Naive thymus-derived CD4-positive, alpha-beta T cell (primary cell): ENCODE measurements at regions of chr4 and their contacts with region 1.

Region 1: DNA sequence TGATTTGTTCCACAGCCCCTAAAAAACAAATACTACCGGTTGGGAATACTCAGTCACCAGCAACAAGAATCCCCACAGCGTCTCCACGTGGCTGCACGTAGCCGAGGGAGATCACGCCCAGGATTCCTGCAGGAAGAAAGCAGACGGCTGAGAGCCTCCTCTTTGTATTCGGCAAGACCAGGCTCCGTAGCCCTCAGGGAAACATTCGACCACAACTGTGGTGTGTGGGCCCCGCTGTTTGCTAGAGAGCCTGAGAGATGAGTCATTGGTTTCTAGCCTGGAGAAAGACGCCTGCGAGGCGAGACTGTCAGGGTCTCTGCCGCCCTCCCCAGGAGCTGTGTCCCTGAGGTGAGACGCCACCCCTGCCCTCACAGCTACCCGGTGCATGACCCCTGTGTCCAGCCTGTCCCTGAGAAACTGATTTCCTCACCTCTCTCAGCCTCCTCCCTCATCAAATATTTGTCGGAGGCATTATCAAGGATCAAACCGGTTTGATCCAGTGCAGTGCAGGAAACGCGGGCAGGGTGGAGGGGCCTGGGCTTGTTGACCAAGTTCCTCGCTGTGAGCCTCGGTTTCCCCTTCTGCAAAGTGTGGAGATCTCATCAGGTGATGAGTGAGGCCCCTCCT is 4.7 kb upstream of the S100P start:
- DNase-seq: peak in 3 of 9 donors; percentile 18 to 79 (median 62)
- ATAC-seq: peak; percentile 79
- H3K4me3 ChIP-seq: peak overlapping the region; percentile 43
- H3K4me3 Mint-ChIP-seq: peak overlapping the region in 9 of 10 donors; percentile 16 to 92 (median 66)
- H3K27ac ChIP-seq: peak overlapping the region; percentile 61
- H3K27ac Mint-ChIP-seq: peak overlapping the region; percentile 93 to 99 (median 96)
- H3K4me1 ChIP-seq: peaks cover 53 to 66% of the 10 kb centered on the region in 2 donors
- H3K4me1 Mint-ChIP-seq: peaks cover 38 to 82% (median 64%) of the 10 kb centered on the region in 7 donors
- H3K27me3 ChIP-seq: no peaks in the 10 kb centered on the region
- H3K27me3 Mint-ChIP-seq: no peaks in the 10 kb centered on the region

Region 2: GRCh38 chr4:6701371-6701770 is 12.4 kb after region 1 on chr4:
- CTCF ChIA-PET with region 1: interaction called, 29 read pairs
- POLR2A ChIA-PET with region 1: interaction called, 552 read pairs
- intact Hi-C with region 1: loop called in 1 of 2 experiments (anchors 1 kb)
- DNase-seq: peak in 1 of 9 donors; percentile 18
- ATAC-seq: no peak
- H3K4me3 ChIP-seq: no peak overlapping the region
- H3K4me3 Mint-ChIP-seq: no peak overlapping the region
- H3K27ac ChIP-seq: no peak overlapping the region
- H3K27ac Mint-ChIP-seq: peak overlapping the region in 1 of 9 donors; percentile 12
- H3K4me1 ChIP-seq: peaks cover 41 to 60% of the 10 kb centered on the region in 2 donors
- H3K4me1 Mint-ChIP-seq: peaks cover 38 to 73% (median 68%) of the 10 kb centered on the region in 7 donors
- H3K27me3 ChIP-seq: no peaks in the 10 kb centered on the region
- H3K27me3 Mint-ChIP-seq: no peaks in the 10 kb centered on the region